Activated T-helper 2 cell treated with anti-CD3 and anti-CD28 coated beads, Interferon-gamma antibody, Interleukin-2, Interleukin-4, amounts not matched to agents 10 μg/mL and 5 μg/mL and 100 μg/mL, durations not matched to agents 14 hours and 24 hours and 36 hours (primary cell): ENCODE measurements at regions of chr19 and their contacts with region 1.

Region 1: GRCh38 chr19:1039646-1040475 is at the start of gene ABCA7:
- DNase-seq: peak; percentile 99
- H3K4me3 Mint-ChIP-seq: peak within 1 kb of the TSS; percentile 96
- H3K27ac Mint-ChIP-seq: peak within 1 kb of the TSS; percentile 68
- H3K4me1 Mint-ChIP-seq: peaks cover 36% of the 10 kb centered on the region
- H3K27me3 Mint-ChIP-seq: no peaks in the 10 kb centered on the region
- total RNA-seq, gene ABCA7: 17.2 and 19.6 TPM in 2 replicates

Region 2: GRCh38 chr19:1020868-1021425 is 18.9 kb before region 1 on chr19 and contains the start of gene TMEM259:
- intact Hi-C with region 1: loop called (anchors 2 kb)
- DNase-seq: peak; percentile 94
- H3K4me3 Mint-ChIP-seq: peak within 1 kb of the TSS; percentile 91
- H3K27ac Mint-ChIP-seq: peak within 1 kb of the TSS; percentile 100
- H3K4me1 Mint-ChIP-seq: peaks cover 20% of the 10 kb centered on the region
- H3K27me3 Mint-ChIP-seq: no peaks in the 10 kb centered on the region
- total RNA-seq, gene TMEM259: 137 and 138 TPM in 2 replicates

Region 3: GRCh38 chr19:1064661-1065605 is 25.1 kb after region 1 on chr19:
- intact Hi-C with region 1: loop called (anchors 2 kb)
- DNase-seq: peak; percentile 72
- H3K4me3 Mint-ChIP-seq: peak overlapping the region; percentile 13
- H3K27ac Mint-ChIP-seq: peak overlapping the region; percentile 60
- H3K4me1 Mint-ChIP-seq: peaks cover 20% of the 10 kb centered on the region
- H3K27me3 Mint-ChIP-seq: no peaks in the 10 kb centered on the region

Region 4: DNA sequence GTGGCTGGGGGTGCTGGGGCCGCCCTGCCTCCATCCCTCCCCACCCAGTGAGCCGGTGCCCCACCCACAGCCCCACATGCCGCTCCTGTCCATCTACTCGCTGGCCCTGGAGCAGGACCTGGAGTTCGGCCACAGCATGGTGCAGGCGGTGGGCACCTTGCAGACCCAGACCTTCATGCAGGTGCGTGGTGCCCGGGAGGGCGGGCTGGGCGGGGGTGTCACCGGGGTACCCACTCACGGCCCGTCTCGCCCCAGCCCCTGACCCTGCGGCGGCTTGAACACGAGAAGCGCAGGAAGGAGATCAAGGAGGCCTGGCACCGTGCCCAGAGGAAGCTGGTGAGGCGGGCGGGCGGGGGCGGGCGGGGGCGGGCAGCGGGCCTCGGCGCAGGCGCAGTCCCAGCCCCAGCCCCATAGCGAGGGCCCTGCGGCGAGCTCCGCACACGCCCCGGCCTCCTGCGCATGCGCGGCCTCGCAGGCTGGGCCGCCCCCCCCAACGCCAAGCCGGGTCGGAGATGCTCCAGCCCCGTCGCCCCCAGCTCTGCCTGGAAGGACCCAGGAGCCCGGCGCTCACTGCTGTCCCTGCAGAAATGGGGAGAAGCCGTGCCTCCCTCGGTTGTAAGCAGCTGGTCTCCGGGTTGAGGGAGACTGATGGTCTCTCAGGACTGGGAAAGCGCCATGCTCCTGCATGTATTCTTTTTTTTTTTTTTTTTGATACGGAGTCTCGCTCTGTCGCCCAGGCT is 34.9 kb after region 1 on chr19:
- intact Hi-C with region 1: loop called (anchors 2 kb)
- DNase-seq: peak; percentile 76
- H3K4me3 Mint-ChIP-seq: peak overlapping the region; percentile 72
- H3K27ac Mint-ChIP-seq: peak overlapping the region; percentile 91
- H3K4me1 Mint-ChIP-seq: peaks cover 40% of the 10 kb centered on the region
- H3K27me3 Mint-ChIP-seq: no peaks in the 10 kb centered on the region